Cardiac septum (tissue), 1 donor: ENCODE measurements at regions of chr2 and their contacts with region 1.

Region 1: GRCh38 chr2:222976521-222977076 is 75.4 kb upstream of the KCNE4 start:
- DNase-seq: no peak

Region 2: GRCh38 chr2:221741496-221742211 is 1234.9 kb before region 1 on chr2:
- intact Hi-C with region 1: no loop called
- DNase-seq: no peak

Region 3: DNA sequence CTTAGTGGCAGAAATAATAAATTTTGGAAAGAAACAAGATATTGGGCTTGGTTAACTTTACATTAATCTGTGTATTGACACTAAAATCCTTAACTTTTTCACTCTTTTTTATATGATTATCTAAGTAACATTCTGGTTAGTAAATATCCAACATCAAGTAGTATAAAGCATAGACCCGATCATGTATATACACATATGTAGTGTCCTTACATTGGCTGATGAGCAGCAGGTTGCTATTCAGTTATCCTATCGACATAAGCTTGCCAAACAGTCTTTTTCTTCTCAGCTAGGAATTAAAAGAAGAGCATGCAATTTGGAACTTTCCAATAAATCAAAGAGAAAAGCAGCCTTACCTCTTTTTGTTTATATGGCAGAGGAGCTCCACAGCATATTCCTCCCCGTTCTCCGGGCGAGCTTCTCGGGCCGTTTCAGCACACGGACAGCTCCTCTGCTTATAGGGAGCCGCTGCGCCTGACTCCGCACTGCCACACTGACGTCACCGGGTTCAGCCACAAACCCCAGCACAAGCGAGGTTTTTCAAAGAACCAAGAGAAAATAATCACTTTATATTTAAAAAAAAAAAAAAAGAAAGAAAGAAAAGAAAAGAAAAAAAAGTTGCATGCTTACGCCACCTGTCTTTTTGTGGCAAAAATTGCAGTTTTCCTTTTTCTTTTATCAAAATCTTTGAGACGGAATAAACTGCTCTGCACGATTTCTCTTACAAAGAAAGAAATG is 625.5 kb after region 1 on chr2 and contains the start of gene SCG2:
- intact Hi-C with region 1: loop called (anchors 10 kb)
- DNase-seq: peak; percentile 85
- total RNA-seq, gene SCG2: 0.97 TPM